ENCODE measurements at regions of chr1 and their contacts with region 1.

Region 1: DNA sequence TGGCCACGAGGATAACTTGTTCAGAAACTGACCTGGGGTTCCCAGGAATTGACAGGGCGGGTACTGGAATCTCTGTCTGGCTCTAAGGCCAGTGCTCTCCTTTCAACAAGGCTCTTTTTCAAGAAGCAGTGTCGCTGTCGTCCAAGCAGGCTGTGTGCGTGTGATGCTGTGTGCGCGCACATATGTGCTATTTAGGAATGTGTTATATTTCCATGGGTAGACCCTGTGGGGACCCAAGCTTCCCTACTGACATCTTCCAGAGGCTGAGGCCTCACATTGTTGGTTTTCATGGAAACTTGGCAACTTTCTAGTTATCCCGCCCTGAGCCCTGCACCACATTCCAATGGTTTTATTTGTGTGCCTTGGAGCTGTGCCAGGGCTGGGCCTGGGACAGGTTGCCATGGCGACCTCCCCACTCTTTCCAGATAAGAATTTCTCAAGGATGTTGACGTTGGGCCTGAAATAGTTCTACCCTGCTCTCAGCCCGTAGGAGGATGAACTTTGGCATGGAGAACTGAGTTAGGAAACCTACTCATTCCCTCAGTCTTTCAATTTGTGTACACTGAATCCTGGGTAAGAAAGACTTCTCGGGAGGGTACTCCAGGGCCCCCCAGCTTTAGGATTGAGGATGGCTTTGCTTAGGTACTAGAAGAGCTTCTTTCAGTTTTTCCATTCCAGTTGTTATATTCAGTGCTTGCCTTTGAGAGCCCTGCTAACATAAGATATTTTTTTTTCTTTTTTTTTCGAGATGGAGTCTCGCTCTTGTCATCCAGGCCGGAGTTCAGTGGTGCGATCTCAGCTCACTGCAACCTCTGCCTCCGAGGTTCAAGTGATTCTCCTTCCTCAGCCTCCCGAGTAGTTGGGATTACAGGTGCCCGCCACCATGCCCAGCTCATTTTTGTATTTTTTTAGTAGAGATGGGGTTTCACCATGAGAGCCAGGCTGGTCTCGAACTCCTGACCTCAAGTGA is 38.8 kb upstream of the SRSF10 start:
- DNase-seq: peak; percentile 98
- ATAC-seq: peak; percentile 48
- H3K4me3 ChIP-seq: peak overlapping the region in 2 of 3 experiments; percentile 4 to 49; a peak in 3 of 6 replicates
- H3K27ac ChIP-seq: peak overlapping the region; percentile 98
- H3K4me1 ChIP-seq: peaks cover 100% of the 10 kb centered on the region
- H3K27me3 ChIP-seq: no peaks in the 10 kb centered on the region; a peak in 1 of 5 replicates
- CTCF ChIP-seq: no peak
- EP300 ChIP-seq: peak; percentile 84 to 85
- POLR2A ChIP-seq: peak in 1 of 2 experiments; percentile 50; a peak in 1 of 4 replicates
- RAD21 ChIP-seq: no peak

Region 2: GRCh38 chr1:23825076-23825761 is 193.7 kb before region 1 on chr1 and contains the start of gene HMGCL:
- CTCF ChIA-PET with region 1: no interaction called
- POLR2A ChIA-PET with region 1: interaction called, 12 read pairs
- in situ Hi-C with region 1: no loop called
- intact Hi-C with region 1: no loop called
- DNase-seq: peak; percentile 80
- ATAC-seq: peak; percentile 94
- H3K4me3 ChIP-seq: peak within 1 kb of the TSS; percentile 90 to 100 (median 99)
- H3K27ac ChIP-seq: peak within 1 kb of the TSS; percentile 99
- H3K4me1 ChIP-seq: peaks cover 24% of the 10 kb centered on the region
- H3K27me3 ChIP-seq: no peaks in the 10 kb centered on the region; a peak in 1 of 5 replicates
- CTCF ChIP-seq: peak; percentile 9; the same call in 1 of the 2 replicates
- EP300 ChIP-seq: 0 out of 4 replicates have a peak, but pooled peaks of 1 of the 2 experiments have one; percentile 35
- POLR2A ChIP-seq: peak; percentile 86 to 95
- RAD21 ChIP-seq: no peak
- total RNA-seq, gene HMGCL: 21.3 and 30.0 TPM in 2 replicates

Region 3: GRCh38 chr1:23959041-23959460 is 59.8 kb before region 1 on chr1:
- CTCF ChIA-PET with region 1: no interaction called
- POLR2A ChIA-PET with region 1: interaction called, 32 read pairs
- in situ Hi-C with region 1: no loop called
- intact Hi-C with region 1: no loop called
- DNase-seq: peak; percentile 92
- ATAC-seq: peak; percentile 85
- H3K4me3 ChIP-seq: peak overlapping the region; percentile 62 to 89 (median 87)
- H3K27ac ChIP-seq: peak overlapping the region; percentile 99
- H3K4me1 ChIP-seq: peaks cover 47% of the 10 kb centered on the region
- H3K27me3 ChIP-seq: peaks cover 0 to 4% of the 10 kb centered on the region in 2 experiments; a peak in 1 of 5 replicates
- CTCF ChIP-seq: peak; percentile 71
- EP300 ChIP-seq: no peak
- POLR2A ChIP-seq: peak in 1 of 2 experiments; percentile 50; a peak in 2 of 4 replicates
- RAD21 ChIP-seq: 0 out of 2 replicates have a peak, but pooled peaks have one; percentile 14

Region 4: DNA sequence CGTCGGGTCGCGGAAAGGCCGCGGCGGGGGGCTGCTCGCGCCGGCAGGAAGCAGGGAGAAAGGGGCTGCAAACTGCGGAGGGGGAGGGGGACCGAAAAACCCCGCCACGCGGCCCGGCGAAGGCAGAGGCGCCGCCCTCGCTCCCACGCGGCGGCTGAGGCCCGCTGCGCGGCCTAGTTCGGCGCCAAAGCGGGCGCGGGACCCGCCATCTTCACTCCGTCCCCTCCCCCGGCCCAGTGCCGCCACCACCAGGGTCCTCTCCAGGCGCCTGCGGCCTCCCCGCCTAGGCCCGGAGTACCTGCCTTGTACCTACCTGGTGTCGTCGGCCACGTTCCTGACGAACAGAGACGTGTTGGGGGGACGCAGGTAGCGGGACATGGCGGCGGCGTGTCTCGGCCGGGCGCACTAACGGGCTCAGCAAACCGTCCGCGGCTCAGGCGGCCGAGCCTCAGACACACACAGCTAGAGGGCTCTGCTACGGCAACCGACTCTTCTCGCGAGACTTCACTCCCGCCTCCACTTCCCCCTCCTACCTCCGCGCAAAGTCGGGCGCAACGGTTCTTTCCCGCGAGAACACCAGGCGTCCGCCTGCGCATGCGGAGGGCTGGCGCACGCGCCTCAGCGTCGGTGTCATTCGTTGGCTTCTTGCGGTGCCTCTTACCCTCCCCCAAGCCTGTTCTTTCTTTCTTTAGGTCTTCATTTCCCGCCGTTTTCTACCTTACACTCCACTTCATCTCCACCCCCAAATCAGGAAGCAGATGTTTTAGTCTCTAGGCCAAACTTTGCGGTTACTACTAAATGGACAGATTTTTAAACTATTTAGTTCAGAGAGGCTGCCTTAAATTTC is 38.8 kb before region 1 on chr1 and contains the start of gene SRSF10:
- CTCF ChIA-PET with region 1: no interaction called
- POLR2A ChIA-PET with region 1: interaction called, 35 read pairs
- in situ Hi-C with region 1: loop called (anchors 5 kb)
- intact Hi-C with region 1: loop called (anchors 2 kb)
- DNase-seq: peak; percentile 95
- ATAC-seq: peak; percentile 96
- H3K4me3 ChIP-seq: peak within 1 kb of the TSS; percentile 91 to 96 (median 93)
- H3K27ac ChIP-seq: peak within 1 kb of the TSS; percentile 98
- H3K4me1 ChIP-seq: peaks cover 56% of the 10 kb centered on the region
- H3K27me3 ChIP-seq: no peaks in the 10 kb centered on the region; a peak in 1 of 5 replicates
- CTCF ChIP-seq: peak; percentile 76
- EP300 ChIP-seq: peak in 1 of 2 experiments; percentile 62; a peak in 2 of 4 replicates
- POLR2A ChIP-seq: peak; percentile 98
- RAD21 ChIP-seq: peak; percentile 73
- total RNA-seq, gene SRSF10: 156 and 186 TPM in 2 replicates

Region 5: GRCh38 chr1:24216276-24217074 is 197.6 kb after region 1 on chr1:
- CTCF ChIA-PET with region 1: no interaction called
- POLR2A ChIA-PET with region 1: no interaction called
- in situ Hi-C with region 1: no loop called
- intact Hi-C with region 1: no loop called
- DNase-seq: no peak
- ATAC-seq: peak; percentile 41; the same call in 2 of the 3 replicates
- H3K4me3 ChIP-seq: no peak overlapping the region
- H3K27ac ChIP-seq: no peak overlapping the region
- H3K4me1 ChIP-seq: no peaks in the 10 kb centered on the region
- H3K27me3 ChIP-seq: peaks cover 1 to 40% of the 10 kb centered on the region in 2 experiments; a peak in 3 of 5 replicates
- CTCF ChIP-seq: no peak
- EP300 ChIP-seq: no peak
- POLR2A ChIP-seq: no peak
- RAD21 ChIP-seq: no peak

Region 6: DNA sequence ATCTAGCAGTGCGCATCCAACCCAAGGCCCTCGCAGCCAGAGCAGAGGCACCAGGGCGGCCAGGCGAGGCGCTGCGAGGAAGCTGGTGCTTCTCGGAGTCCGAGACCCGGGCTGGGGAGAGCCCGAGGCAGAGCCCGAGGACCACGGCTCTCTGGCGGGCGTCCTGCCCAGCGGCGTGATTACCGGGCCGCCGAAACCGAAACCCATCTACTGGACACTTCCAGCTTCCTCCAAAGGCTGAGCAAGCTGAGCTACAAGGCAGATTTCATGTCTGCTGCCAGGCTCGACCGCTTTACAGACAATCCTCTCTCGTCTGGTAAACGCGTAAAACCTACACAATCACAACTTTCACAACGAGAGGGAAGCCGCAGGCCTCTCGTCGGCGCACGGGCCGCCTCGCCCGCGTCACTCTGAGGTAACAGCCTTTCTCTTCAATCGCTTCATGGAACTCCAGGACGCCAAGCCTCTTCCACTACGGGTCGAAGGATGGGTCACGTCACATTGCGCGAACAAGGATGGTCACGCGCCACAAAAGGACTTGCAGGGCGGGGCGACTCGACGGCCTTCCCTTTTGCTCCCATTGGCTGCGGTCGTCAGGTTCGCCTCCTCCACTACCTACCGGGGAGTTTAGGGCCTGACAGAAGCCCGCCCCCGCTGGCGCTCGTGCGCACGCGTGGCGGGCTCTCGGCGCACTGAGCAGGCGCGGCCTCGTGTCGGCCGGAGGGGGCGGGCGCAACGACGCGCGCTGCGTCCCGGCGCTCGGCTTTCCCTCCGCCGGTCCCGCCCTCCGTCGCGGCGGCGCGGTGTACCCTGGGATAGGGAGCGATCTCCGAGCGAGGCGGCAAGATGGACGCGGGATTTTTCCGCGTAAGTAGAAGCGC is 623.8 kb after region 1 on chr1 and contains the start of gene SRRM1:
- CTCF ChIA-PET with region 1: no interaction called
- POLR2A ChIA-PET with region 1: no interaction called
- in situ Hi-C with region 1: no loop called
- intact Hi-C with region 1: loop called (anchors 5 kb)
- DNase-seq: peak; percentile 99
- ATAC-seq: peak; percentile 91
- H3K4me3 ChIP-seq: peak within 1 kb of the TSS; percentile 94 to 98 (median 98)
- H3K27ac ChIP-seq: peak within 1 kb of the TSS; percentile 100
- H3K4me1 ChIP-seq: peaks cover 61% of the 10 kb centered on the region
- H3K27me3 ChIP-seq: no peaks in the 10 kb centered on the region; a peak in 1 of 5 replicates
- CTCF ChIP-seq: peak; percentile 27
- EP300 ChIP-seq: no peak
- POLR2A ChIP-seq: peak; percentile 95 to 98
- RAD21 ChIP-seq: no peak
- total RNA-seq, gene SRRM1: 31.6 and 33.7 TPM in 2 replicates